Panc1 (cell line): ENCODE measurements at regions of chr2 and their contacts with region 1.

Region 1: GRCh38 chr2:164934401-164935117 is 20.8 kb downstream of the SLC38A11 start:
- DNase-seq: no peak
- ATAC-seq: no peak
- H3K4me3 ChIP-seq: no peak overlapping the region
- H3K27ac ChIP-seq: no peak overlapping the region
- H3K4me1 ChIP-seq: no peaks in the 10 kb centered on the region
- H3K27me3 ChIP-seq: no peaks in the 10 kb centered on the region
- CTCF ChIP-seq: no peak

Region 2: DNA sequence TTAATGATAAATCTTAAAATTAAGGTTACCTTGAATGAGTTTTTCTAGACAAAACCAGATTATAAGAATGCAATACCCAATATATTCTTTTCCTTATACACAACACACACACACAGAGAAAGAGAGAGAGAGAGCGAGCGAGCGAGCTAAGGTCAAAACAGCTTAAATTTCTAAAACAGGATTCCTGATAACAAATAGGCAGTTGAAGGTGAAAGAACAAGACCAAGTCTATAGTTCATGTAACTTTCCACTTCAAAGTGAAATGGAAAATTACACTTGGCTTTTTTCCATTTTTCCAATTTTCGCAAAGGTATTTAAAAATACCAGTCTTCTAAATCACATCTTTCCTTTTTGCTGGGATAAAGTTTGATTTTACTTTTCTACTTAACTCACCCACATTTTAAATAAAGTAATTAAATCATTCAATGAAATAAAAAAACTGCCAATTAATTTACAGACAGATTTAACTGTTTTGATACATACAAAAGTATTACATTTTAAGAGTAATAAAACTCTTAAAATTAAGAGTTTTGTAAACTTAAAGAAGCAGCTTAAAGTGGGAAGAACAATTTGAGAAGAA is 191.7 kb before region 1 on chr2:
- CTCF ChIA-PET with region 1: interaction called, 15 read pairs
- POLR2A ChIA-PET with region 1: no interaction called
- in situ Hi-C with region 1: no loop called
- intact Hi-C with region 1: no loop called
- DNase-seq: no peak
- ATAC-seq: no peak
- H3K4me3 ChIP-seq: no peak overlapping the region
- H3K27ac ChIP-seq: no peak overlapping the region
- H3K4me1 ChIP-seq: no peaks in the 10 kb centered on the region
- H3K27me3 ChIP-seq: no peaks in the 10 kb centered on the region
- CTCF ChIP-seq: no peak

Region 3: GRCh38 chr2:164896634-164897355 is 37.8 kb before region 1 on chr2:
- CTCF ChIA-PET with region 1: no interaction called
- POLR2A ChIA-PET with region 1: no interaction called
- in situ Hi-C with region 1: no loop called
- intact Hi-C with region 1: no loop called
- DNase-seq: no peak
- ATAC-seq: no peak
- H3K4me3 ChIP-seq: no peak overlapping the region
- H3K27ac ChIP-seq: no peak overlapping the region
- H3K4me1 ChIP-seq: no peaks in the 10 kb centered on the region
- H3K27me3 ChIP-seq: no peaks in the 10 kb centered on the region
- CTCF ChIP-seq: no peak

Region 4: DNA sequence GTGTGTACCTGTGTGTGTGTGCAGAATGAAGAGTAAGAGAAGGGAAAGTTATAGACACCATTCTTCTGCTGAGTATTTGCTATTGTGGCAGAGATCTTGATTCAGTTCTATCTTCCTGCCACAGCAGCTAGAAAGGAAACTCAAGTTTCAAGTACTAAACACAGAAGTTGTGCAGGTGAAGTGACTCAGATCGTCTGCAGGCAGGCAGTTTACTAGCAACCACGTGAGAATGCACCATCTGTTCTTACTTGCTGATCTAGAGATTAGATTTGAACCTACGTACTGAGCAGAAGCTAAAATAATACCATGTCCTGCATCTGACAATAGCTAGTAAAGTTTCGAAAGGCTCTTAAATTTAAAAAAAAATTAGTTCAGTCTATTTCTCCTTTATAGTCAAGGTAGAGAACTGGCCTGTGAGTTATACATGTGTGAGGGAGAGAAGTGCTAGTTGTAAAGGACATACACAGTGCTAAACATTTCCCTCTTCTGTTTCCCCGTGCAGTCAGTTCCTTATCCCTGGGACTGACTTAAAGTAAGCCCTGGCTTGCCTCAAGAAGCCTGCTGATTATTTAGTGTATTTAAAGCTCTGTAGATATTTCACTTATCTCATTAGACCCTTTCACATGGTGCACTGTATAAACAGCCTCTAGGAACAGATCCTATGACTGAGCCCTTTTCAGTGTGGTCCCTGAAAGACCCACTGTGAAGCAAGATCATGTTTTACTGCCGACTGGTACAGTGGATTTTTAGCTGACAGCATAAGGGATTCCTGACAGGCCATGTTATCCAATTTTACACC is 24.3 kb before region 1 on chr2:
- CTCF ChIA-PET with region 1: no interaction called
- POLR2A ChIA-PET with region 1: no interaction called
- in situ Hi-C with region 1: no loop called
- intact Hi-C with region 1: no loop called
- DNase-seq: no peak
- ATAC-seq: no peak
- H3K4me3 ChIP-seq: no peak overlapping the region
- H3K27ac ChIP-seq: no peak overlapping the region
- H3K4me1 ChIP-seq: no peaks in the 10 kb centered on the region
- H3K27me3 ChIP-seq: no peaks in the 10 kb centered on the region
- CTCF ChIP-seq: no peak

Region 5: DNA sequence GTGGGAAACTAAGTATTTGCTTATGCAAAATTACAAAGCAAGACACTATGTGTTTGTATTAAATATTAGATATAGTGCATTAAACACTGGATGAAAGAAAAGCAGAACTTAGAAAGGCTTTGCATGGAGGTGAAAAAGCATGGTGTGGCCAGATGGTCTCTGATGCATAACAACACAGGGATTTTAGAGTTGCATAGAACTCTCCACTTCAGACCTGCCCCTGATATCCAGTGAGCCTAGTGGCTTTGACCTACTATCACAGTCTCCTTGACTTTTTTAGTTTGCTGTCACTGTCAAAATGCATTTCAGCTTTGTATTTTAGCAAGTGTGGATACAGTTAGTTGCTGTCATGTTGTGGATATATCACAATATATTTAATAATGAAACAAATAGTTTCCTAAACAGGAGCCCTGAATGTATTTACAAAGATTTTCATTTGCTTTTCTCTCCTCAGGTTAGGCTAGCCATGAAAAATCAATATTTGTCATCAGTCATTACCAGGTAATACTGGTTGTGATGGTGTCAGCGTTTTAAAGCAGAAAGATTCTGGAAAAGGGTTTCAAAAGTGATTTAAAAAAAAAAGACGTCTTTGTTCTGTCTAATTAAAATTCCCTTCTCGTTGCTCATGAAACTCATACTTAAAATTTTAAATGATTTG is 540.2 kb after region 1 on chr2:
- CTCF ChIA-PET with region 1: no interaction called
- POLR2A ChIA-PET with region 1: no interaction called
- in situ Hi-C with region 1: no loop called
- intact Hi-C with region 1: no loop called
- DNase-seq: no peak
- ATAC-seq: no peak
- H3K4me3 ChIP-seq: no peak overlapping the region
- H3K27ac ChIP-seq: no peak overlapping the region
- H3K4me1 ChIP-seq: no peaks in the 10 kb centered on the region
- H3K27me3 ChIP-seq: no peaks in the 10 kb centered on the region
- CTCF ChIP-seq: no peak

Region 6: DNA sequence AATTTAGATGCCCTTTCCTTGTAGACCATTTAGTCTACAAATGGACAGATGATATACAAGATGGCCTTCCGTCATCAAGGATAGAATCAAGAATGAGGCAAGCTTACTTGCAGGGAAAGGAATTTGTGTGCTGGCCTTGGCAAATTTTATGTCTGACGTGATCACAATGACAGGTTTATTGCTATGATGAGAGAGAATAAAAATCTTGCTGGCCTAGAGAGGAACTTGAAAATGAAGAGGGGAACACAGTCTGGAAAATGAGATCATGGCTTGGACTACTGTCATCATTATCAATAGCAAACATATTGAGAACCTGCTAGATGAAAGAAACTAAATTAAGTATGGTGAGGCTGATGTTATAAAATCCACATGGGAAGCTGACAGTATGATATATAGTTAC is 600.9 kb after region 1 on chr2:
- CTCF ChIA-PET with region 1: no interaction called
- POLR2A ChIA-PET with region 1: no interaction called
- in situ Hi-C with region 1: no loop called
- intact Hi-C with region 1: no loop called
- DNase-seq: no peak
- ATAC-seq: no peak
- H3K4me3 ChIP-seq: no peak overlapping the region
- H3K27ac ChIP-seq: no peak overlapping the region
- H3K4me1 ChIP-seq: no peaks in the 10 kb centered on the region
- H3K27me3 ChIP-seq: no peaks in the 10 kb centered on the region
- CTCF ChIP-seq: no peak